ENCODE measurements at regions of chr17 and their contacts with region 1.

Region 1: DNA sequence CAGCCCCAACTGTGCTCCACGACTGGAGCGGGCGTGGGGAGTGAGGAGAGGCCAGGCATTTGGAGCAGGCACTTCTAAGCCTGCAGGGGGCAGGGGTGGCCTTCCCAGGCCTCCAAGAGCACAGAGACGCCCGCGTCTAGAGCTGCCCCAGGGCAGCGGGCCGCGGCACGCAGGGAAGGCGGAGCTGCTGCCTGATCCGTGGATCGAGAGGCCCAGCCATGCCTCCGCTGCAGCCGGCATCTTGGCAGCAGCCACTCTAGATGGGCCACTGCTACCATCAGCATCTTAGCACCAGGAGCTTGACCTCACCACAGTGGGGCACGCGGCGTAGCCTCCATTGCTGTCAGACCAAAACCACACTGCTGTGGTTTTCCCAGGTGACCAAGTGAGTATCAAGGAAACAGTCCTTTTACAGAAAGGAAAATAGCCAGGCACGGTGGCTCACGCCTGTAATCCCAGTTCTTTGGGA is 20.4 kb upstream of the WDR45B start:
- DNase-seq: peak; percentile 83 to 88
- H3K4me3 ChIP-seq: peak overlapping the region in 1 of 4 donors; percentile 0
- H3K27ac ChIP-seq: peak overlapping the region; percentile 5 to 81 (median 43)
- H3K4me1 ChIP-seq: peaks cover 0 to 27% (median 18%) of the 10 kb centered on the region in 4 donors
- H3K27me3 ChIP-seq: no peaks in the 10 kb centered on the region
- CTCF ChIP-seq: peak in 5 of 7 experiments; percentile 46 to 75 (median 70)
- EP300 ChIP-seq: no peak
- POLR2A ChIP-seq: no peak

Region 2: DNA sequence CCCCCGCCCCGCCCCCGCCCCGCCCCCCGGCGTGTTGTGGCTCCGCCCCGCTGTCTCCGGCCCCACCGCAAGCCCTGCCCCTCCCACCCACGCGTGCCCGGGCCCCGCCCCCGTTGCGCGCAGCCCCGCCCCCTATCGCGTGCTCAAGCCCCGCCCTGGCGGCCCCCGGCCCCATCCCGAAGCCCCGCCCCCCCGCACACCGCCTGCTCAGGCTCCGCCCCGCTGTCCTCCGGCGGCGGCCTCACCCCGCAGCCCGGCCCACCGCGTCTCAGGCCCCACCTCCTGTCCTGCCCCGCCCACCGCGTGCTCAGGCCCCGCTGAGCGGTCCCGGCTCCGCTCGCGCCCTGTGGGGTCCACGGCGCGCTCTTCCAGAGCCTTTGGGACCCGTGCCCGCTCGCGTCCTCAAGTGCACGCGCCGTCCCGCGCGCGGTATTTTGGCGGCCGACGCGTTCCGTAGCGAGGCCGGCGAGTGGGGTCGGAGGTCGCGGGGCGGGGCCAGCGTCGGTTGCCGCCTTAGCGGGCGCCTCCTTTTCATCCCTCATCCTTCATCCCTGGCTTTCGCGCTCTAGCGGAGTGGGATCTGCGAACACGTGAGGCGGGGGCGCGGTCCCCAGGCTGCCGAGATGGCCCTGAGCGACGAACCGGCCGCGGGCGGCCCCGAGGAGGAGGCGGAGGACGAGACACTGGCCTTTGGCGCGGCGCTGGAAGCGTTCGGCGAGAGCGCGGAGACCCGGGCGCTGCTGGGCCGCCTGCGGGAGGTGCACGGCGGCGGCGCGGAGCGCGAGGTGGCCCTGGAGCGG is 83.1 kb after region 1 on chr17 and contains the start of gene TBCD:
- intact Hi-C with region 1: loop called (anchors 10 kb)
- DNase-seq: peak; percentile 87 to 97
- H3K4me3 ChIP-seq: peak within 1 kb of the TSS; percentile 78 to 93 (median 90)
- H3K27ac ChIP-seq: peak within 1 kb of the TSS; percentile 84 to 94 (median 89)
- H3K4me1 ChIP-seq: peaks cover 8 to 28% (median 21%) of the 10 kb centered on the region in 4 donors
- H3K27me3 ChIP-seq: no peaks in the 10 kb centered on the region
- CTCF ChIP-seq: no peak
- EP300 ChIP-seq: no peak
- POLR2A ChIP-seq: no peak
- total RNA-seq, gene TBCD: 51.2 to 155 (median 104) TPM